Right lobe of liver (tissue), 6 donors: ENCODE measurements at regions of chr12 and their contacts with region 1.

Region 1: DNA sequence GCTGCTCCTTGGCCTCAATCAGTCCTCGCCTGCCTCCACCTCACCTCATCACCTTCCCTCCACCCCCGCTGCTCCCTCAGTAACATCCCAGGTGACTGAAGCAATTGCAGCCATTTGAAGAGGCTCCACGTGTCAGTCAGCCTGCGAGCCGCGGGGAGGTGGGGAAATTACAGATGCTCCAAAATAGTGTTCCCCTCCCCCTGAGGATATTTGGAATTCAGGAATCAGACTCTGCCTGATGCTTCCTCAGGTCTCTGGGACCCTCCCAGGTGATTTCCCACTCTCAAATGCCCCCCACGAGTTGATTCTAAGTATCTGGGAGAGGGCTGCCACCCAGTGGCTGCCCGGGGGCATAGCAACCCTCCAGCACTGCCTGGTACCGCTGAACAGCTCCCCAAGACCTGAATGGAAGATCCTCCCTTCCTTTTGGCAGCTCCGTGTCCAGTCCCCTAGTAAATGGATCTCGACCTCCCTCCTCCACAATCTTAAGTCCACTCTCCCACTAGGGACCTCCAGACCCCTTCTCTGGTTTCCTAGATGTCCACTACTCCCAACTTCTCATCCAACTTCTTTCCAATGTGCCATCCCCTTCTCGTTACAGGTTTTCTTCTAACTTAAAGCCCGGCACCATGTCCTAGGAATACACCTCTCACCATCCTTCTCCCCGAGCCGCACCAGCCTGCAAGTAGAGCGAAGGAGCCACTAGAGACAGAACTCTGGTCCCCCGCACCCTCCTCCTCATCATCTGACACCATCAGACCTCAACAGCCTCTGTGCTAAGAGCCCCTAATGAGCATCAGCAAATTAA is 1.4 kb upstream of the ASIC1 start:
- DNase-seq: peak in 1 of 3 donors; percentile 54
- ATAC-seq: peak; percentile 67 to 79 (median 74)
- H3K4me3 ChIP-seq: no peak overlapping the region
- H3K27ac ChIP-seq: no peak overlapping the region
- H3K4me1 ChIP-seq: peaks cover 0 to 7% (median 0%) of the 10 kb centered on the region in 4 donors
- H3K27me3 ChIP-seq: no peaks in the 10 kb centered on the region
- CTCF ChIP-seq: peak; percentile 88 to 97 (median 93)
- POLR2A ChIP-seq: no peak

Region 2: GRCh38 chr12:49967042-49967776 is 88.8 kb before region 1 on chr12:
- intact Hi-C with region 1: loop called (anchors 5 kb)
- DNase-seq: peak; percentile 91 to 94 (median 93)
- ATAC-seq: peak; percentile 77 to 83 (median 79)
- H3K4me3 ChIP-seq: peak overlapping the region; percentile 12 to 41 (median 29)
- H3K27ac ChIP-seq: no peak overlapping the region
- H3K4me1 ChIP-seq: peaks cover 0 to 33% (median 3%) of the 10 kb centered on the region in 4 donors
- H3K27me3 ChIP-seq: no peaks in the 10 kb centered on the region
- CTCF ChIP-seq: peak; percentile 67 to 90 (median 70)
- POLR2A ChIP-seq: no peak

Region 3: DNA sequence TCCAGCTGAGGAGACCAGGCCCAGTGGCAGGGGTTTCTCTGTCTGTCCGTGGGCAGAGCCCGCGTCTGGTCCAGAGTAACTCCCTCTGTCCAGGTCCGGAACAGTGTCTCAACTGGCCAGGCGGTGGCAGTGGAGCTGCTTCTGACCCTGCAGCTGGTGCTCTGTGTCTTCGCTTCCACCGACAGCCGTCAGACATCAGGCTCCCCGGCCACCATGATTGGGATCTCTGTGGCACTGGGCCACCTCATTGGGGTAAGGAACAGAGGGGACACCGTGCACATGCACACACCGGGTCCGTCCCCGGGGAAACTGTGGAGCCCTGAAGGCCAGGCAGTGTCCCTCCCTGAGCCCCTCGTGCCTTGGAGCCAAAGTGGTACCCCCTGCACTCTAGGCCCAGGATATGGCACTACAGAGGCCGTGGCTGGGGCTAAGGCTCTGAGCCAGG is 81.8 kb before region 1 on chr12:
- intact Hi-C with region 1: loop called (anchors 5 kb)
- DNase-seq: peak; percentile 73 to 80 (median 77)
- ATAC-seq: peak; percentile 86 to 90 (median 89)
- H3K4me3 ChIP-seq: no peak overlapping the region
- H3K27ac ChIP-seq: no peak overlapping the region
- H3K4me1 ChIP-seq: no peaks in the 10 kb centered on the region
- H3K27me3 ChIP-seq: no peaks in the 10 kb centered on the region
- CTCF ChIP-seq: peak; percentile 48 to 72 (median 62)
- POLR2A ChIP-seq: no peak